Mammary epithelial cell (primary cell): ENCODE measurements at regions of chr2 and their contacts with region 1.

Region 1: GRCh38 chr2:14492920-14493503 is 139.5 kb upstream of the LRATD1 start:
- DNase-seq: peak; percentile 96
- H3K4me3 ChIP-seq: no peak overlapping the region
- H3K27ac ChIP-seq: peak overlapping the region; percentile 53
- H3K4me1 ChIP-seq: peaks cover 8% of the 10 kb centered on the region
- H3K27me3 ChIP-seq: no peaks in the 10 kb centered on the region
- CTCF ChIP-seq: no peak

Region 2: DNA sequence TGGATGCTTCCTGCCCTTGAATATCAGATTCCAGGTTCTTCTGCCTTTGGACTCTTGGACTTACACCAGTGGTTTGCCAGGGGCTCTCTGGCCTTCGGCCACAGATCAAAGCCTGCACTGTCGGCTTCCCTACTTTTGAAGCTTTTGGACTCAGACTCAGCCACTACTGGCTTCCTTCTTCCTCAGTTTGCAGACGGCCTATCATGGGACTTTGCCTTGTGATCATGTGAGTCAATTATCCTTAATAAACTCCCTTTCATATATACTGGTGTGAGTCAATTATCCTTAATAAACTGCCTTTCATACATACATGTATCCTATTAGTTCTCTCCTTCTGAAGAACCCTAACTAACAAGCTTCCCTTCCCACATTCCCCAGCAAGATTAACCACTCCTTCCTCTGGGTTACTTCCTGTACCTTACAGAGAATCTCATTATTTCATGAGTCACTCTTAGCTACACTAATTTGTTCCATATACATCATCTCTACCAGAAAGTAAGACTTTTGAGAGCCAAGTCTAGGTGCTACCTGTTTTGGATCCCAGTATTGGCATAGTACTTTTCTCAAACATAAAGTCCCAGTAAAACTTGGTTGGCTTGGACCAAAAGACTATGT is 108.3 kb after region 1 on chr2:
- CTCF ChIA-PET with region 1: no interaction called
- dilution Hi-C with region 1: loop called (anchors 5 kb)
- in situ Hi-C with region 1: no loop called
- intact Hi-C with region 1: no loop called
- DNase-seq: peak; percentile 55
- H3K4me3 ChIP-seq: no peak overlapping the region
- H3K27ac ChIP-seq: no peak overlapping the region
- H3K4me1 ChIP-seq: no peaks in the 10 kb centered on the region
- H3K27me3 ChIP-seq: no peaks in the 10 kb centered on the region
- CTCF ChIP-seq: no peak

Region 3: DNA sequence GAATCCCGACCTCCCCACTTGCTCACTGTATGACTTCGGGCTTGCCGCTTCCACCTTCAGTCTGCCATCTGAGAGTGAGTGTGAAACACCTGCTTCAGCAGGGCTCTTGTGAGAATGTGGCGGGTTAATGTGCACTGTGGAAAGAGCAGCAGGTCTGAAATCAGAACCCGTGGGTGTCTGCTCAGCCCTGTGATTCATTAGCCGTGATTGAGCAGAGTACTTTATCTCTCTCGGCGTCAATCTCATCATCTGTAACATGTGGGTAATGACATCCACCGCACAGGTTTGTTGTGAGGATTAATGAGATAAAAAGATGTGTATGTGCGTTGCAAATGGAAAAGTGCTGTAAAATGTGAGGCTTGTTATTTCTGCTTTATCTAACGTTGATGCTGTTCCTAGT is 268.1 kb after region 1 on chr2:
- CTCF ChIA-PET with region 1: no interaction called
- dilution Hi-C with region 1: no loop called
- in situ Hi-C with region 1: no loop called
- intact Hi-C with region 1: no loop called
- DNase-seq: no peak
- H3K4me3 ChIP-seq: no peak overlapping the region
- H3K27ac ChIP-seq: no peak overlapping the region
- H3K4me1 ChIP-seq: peaks cover 15% of the 10 kb centered on the region
- H3K27me3 ChIP-seq: no peaks in the 10 kb centered on the region
- CTCF ChIP-seq: no peak